Mammary epithelial cell (primary cell): ENCODE measurements at regions of chr12 and their contacts with region 1.

Region 1: GRCh38 chr12:88299567-88300101 is 157.5 kb downstream of the TMTC3 start:
- DNase-seq: peak; percentile 98
- H3K4me3 ChIP-seq: no peak overlapping the region
- H3K27ac ChIP-seq: peak overlapping the region; percentile 90
- H3K4me1 ChIP-seq: peaks cover 17% of the 10 kb centered on the region
- H3K27me3 ChIP-seq: no peaks in the 10 kb centered on the region
- CTCF ChIP-seq: no peak

Region 2: GRCh38 chr12:88186003-88186402 is 113.6 kb before region 1 on chr12:
- CTCF ChIA-PET with region 1: no interaction called
- dilution Hi-C with region 1: no loop called
- in situ Hi-C with region 1: no loop called
- intact Hi-C with region 1: loop called (anchors 10 kb)
- DNase-seq: peak; percentile 86
- H3K4me3 ChIP-seq: no peak overlapping the region
- H3K27ac ChIP-seq: peak overlapping the region; percentile 40
- H3K4me1 ChIP-seq: peaks cover 4% of the 10 kb centered on the region
- H3K27me3 ChIP-seq: no peaks in the 10 kb centered on the region
- CTCF ChIP-seq: no peak

Region 3: GRCh38 chr12:88241862-88242570 is 57.6 kb before region 1 on chr12:
- CTCF ChIA-PET with region 1: no interaction called
- dilution Hi-C with region 1: no loop called
- in situ Hi-C with region 1: no loop called
- intact Hi-C with region 1: loop called (anchors 2 kb)
- DNase-seq: peak; percentile 95
- H3K4me3 ChIP-seq: no peak overlapping the region
- H3K27ac ChIP-seq: peak overlapping the region; percentile 83
- H3K4me1 ChIP-seq: peaks cover 38% of the 10 kb centered on the region
- H3K27me3 ChIP-seq: no peaks in the 10 kb centered on the region
- CTCF ChIP-seq: no peak

Region 4: GRCh38 chr12:88266806-88267360 is 32.8 kb before region 1 on chr12:
- CTCF ChIA-PET with region 1: no interaction called
- dilution Hi-C with region 1: no loop called
- in situ Hi-C with region 1: no loop called
- intact Hi-C with region 1: no loop called
- DNase-seq: no peak
- H3K4me3 ChIP-seq: no peak overlapping the region
- H3K27ac ChIP-seq: no peak overlapping the region
- H3K4me1 ChIP-seq: no peaks in the 10 kb centered on the region
- H3K27me3 ChIP-seq: no peaks in the 10 kb centered on the region
- CTCF ChIP-seq: no peak

Region 5: DNA sequence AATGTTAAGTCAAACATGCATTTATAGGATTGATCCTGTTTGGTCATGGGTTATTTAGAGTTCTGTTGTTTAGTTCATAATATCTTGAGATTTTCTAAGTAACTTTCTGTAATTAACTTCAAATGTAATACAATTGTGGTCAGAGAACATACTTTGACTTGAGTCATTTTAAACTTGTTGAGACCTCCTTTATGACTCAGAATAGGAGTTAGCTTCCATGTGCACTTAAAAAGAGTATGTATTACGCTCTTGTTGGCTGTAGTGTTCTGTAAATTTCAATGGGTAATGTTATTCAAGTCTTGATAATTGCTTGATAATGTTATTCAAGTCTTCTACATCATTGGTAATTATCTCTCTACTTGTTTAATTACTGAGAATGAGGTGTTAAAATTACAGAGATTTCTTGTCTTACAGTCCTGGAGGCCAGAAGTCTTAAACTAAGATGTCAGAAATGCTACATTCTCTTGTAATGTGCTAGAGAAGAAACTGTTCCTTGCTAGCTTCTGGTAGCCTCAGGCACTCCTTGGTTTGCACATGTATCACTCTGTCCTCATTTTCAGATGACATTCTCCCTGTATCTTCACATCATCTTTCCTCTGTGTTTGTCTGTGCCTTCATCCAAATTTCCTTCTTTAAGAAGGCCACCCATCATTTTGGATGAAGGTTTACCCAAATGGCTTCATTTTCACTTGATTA is 39.8 kb after region 1 on chr12:
- CTCF ChIA-PET with region 1: no interaction called
- dilution Hi-C with region 1: no loop called
- in situ Hi-C with region 1: no loop called
- intact Hi-C with region 1: no loop called
- DNase-seq: peak; percentile 87
- H3K4me3 ChIP-seq: no peak overlapping the region
- H3K27ac ChIP-seq: peak overlapping the region; percentile 82
- H3K4me1 ChIP-seq: peaks cover 26% of the 10 kb centered on the region
- H3K27me3 ChIP-seq: no peaks in the 10 kb centered on the region
- CTCF ChIP-seq: no peak

Region 6: GRCh38 chr12:88393017-88393767 is 93.6 kb after region 1 on chr12:
- CTCF ChIA-PET with region 1: interaction called, 8 read pairs
- dilution Hi-C with region 1: no loop called
- in situ Hi-C with region 1: no loop called
- intact Hi-C with region 1: loop called (anchors 2 kb)
- DNase-seq: peak; percentile 56
- H3K4me3 ChIP-seq: no peak overlapping the region
- H3K27ac ChIP-seq: no peak overlapping the region
- H3K4me1 ChIP-seq: peaks cover 10% of the 10 kb centered on the region
- H3K27me3 ChIP-seq: no peaks in the 10 kb centered on the region
- CTCF ChIP-seq: peak; percentile 55 to 56

Region 7: GRCh38 chr12:88420457-88420856 is 120.8 kb after region 1 on chr12:
- CTCF ChIA-PET with region 1: no interaction called
- dilution Hi-C with region 1: no loop called
- in situ Hi-C with region 1: no loop called
- intact Hi-C with region 1: loop called (anchors 2 kb)
- DNase-seq: peak; percentile 88
- H3K4me3 ChIP-seq: no peak overlapping the region
- H3K27ac ChIP-seq: no peak overlapping the region
- H3K4me1 ChIP-seq: peaks cover 16% of the 10 kb centered on the region
- H3K27me3 ChIP-seq: no peaks in the 10 kb centered on the region
- CTCF ChIP-seq: no peak

Region 8: DNA sequence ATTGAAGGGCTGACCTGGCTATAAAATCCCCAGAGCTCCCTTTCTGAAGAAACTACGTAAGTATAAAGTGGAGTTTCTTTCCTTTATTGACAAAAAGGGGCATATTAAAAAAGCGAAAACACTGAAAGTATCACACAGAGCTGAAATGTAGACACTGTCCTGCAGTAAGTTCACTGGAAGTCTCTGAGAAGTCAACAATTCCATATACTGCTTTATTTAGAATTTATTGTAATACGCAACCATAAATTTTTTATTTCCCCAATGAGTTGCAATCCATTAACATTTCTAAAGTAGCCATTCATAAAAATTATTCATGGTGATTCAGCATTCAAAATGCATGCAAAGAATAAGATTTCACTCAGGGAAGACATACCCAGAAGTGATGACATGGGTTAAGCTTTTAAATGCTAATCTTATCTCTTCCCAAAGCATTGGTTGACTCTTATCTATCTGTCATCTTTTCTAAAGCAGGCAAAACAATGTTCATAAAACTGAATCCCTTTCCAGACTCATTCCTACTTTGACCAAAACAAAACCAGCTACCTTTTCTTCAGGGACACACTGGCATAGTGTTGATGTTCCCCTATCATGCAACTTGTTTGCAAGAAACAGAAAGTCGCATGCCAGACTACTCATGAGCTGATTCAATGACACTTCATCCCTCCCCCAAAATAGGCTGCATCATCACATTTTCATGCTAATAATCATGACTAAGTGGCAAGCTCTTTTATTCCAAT is 263.4 kb after region 1 on chr12:
- CTCF ChIA-PET with region 1: no interaction called
- dilution Hi-C with region 1: no loop called
- in situ Hi-C with region 1: no loop called
- intact Hi-C with region 1: loop called (anchors 5 kb)
- DNase-seq: peak; percentile 49
- H3K4me3 ChIP-seq: no peak overlapping the region
- H3K27ac ChIP-seq: peak overlapping the region; percentile 53
- H3K4me1 ChIP-seq: peaks cover 55% of the 10 kb centered on the region
- H3K27me3 ChIP-seq: no peaks in the 10 kb centered on the region
- CTCF ChIP-seq: no peak